HEK293T (cell line): ENCODE measurements at regions of chr3 and their contacts with region 1.

Region 1: GRCh38 chr3:59052803-59053411 is 3.1 kb upstream of the CFAP20DC start:
- DNase-seq: peak; percentile 14

Region 2: GRCh38 chr3:58837856-58838255 is 215.1 kb before region 1 on chr3:
- CTCF ChIA-PET with region 1: no interaction called
- POLR2A ChIA-PET with region 1: no interaction called
- DNase-seq: no peak

Region 3: GRCh38 chr3:59290358-59290757 is 237.5 kb after region 1 on chr3:
- CTCF ChIA-PET with region 1: interaction called, 12 read pairs
- POLR2A ChIA-PET with region 1: no interaction called
- DNase-seq: no peak